Posterior cingulate gyrus (tissue), 11 donors: ENCODE measurements at regions of chrX and their contacts with region 1.

Region 1: DNA sequence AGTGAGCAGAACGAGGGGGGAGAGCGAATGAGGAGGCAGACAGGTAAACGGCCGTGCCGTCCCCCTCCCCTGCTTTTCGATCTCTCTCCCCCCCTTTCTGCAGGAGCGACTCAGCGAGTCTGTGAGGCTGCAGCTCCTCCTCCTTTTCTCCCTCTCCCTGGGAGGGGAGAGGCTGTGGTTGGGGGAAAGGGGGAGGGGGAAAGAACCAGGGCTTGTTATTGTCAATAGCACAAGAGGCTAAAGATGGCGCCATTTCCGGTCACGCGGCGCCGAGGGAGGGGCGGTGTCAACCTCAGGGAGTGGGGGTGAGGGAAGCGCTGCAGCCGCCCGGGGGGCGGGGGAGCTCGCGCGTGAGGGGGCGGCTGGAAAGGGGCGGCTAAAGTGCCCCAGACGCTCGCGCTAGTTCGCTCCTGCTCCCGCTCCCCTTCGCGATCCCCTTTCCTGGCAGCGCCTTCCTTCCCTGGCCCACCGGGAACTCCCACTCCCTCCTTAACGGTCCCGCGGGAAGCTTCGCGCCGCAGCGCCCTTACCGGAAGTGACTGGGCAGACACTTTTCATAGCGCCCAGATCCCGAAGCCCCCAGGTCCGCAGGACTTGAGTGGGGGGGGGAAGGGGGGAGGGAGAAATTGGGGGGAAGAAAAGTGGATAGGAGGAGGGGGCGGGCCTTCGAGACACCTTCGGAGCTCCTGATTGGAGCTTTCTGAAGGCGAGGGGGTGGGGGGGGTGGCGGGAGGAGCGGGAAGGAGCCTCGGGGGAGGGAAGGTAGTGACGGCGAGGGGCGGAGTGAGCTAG is at the start of gene CUL4B:
- DNase-seq: peak; percentile 85 to 99 (median 90)

Region 2: DNA sequence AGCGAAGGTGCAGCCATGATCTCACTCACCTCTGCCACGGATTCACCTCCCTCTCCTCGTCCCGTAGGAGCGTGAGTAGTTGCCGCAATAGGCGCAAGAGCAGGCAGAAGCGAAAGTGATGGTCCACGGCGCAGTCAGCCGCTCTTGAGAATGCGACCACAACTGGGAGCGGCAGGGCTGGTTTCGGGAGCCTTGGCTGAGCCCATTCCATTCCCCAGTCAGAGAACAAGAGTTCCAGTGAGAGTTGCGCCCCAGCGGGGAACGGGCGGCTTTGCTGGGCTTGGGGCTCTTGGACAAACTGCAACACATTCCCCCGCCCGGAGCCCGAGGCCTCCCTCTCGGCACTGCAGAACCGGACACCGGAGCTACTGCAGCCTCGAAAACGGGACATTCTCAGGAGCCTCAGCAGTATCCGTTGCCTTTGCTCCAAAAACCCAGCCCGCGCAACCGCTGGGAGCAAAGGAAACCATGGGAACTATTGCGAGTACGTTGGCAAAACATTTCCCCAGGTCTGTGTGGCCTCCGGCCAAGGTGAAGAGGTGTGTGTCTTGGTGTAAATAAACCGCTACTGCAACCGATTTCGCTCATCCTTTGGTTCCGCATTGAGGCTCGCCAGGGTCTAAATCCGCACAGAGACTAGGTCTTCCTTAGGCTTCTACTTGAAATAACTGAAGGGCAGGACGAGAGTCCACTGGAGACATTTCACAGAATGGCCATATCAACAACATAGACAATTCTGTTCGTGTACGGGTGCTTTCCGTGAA is 316.1 kb before region 1 on chrX:
- intact Hi-C with region 1: loop called (anchors 10 kb)
- DNase-seq: peak; percentile 26 to 92 (median 44)

Region 3: GRCh38 chrX:120603707-120604360 is 42.8 kb after region 1 on chrX and contains the start of gene MCTS1:
- intact Hi-C with region 1: loop called (anchors 5 kb)
- DNase-seq: peak; percentile 59 to 95 (median 77)

Region 4: GRCh38 chrX:120629667-120630537 is 68.9 kb after region 1 on chrX and contains the start of gene C1GALT1C1:
- intact Hi-C with region 1: loop called (anchors 2 kb)
- DNase-seq: peak; percentile 73 to 99 (median 84)

Region 5: DNA sequence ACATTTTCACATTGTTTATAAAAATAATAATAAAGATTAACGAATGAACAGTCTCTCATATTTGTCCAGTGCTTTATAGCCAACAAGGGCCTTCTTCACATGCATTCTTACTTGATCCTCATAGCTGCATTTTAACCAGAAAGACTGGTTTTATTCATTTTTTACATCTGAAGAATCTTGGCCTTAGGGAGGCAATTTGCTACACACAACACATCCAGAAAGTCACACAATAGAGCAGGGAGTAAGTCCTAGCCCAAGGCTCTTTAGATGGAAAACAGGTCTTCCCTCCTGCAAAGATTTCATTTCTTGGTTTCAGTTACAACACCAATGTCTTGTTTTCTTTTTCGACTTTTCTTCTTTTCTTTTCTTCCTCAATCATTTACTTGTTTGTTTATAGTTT is 81.8 kb after region 1 on chrX:
- intact Hi-C with region 1: no loop called
- DNase-seq: no peak

Region 6: GRCh38 chrX:120697053-120697452 is 136.0 kb after region 1 on chrX:
- intact Hi-C with region 1: no loop called
- DNase-seq: no peak